ENCODE measurements at regions of chr15 and their contacts with region 1.

Region 1: DNA sequence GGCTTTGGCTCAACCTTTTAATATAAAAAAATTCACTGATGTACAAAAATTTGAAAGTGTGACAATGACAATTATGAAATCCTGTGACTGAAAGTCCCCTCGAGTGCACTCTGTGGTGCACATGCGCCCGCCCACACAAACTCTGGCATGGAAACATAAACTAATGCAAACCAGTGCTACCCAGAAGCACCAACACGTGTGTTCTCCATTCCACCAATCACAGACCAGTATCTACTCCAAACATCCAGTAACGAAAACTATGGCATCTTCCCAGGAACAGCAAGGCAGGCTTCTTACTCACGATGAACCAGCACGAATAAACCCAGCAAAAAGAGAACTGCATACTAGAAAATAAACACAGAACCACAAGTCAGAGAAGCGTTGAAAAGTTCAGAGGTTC is 11.7 kb upstream of the NMB start:
- DNase-seq: peak; percentile 59
- H3K4me3 Mint-ChIP-seq: no peak overlapping the region
- H3K27ac Mint-ChIP-seq: no peak overlapping the region
- H3K4me1 Mint-ChIP-seq: peaks cover 35% of the 10 kb centered on the region
- H3K27me3 Mint-ChIP-seq: no peaks in the 10 kb centered on the region

Region 2: DNA sequence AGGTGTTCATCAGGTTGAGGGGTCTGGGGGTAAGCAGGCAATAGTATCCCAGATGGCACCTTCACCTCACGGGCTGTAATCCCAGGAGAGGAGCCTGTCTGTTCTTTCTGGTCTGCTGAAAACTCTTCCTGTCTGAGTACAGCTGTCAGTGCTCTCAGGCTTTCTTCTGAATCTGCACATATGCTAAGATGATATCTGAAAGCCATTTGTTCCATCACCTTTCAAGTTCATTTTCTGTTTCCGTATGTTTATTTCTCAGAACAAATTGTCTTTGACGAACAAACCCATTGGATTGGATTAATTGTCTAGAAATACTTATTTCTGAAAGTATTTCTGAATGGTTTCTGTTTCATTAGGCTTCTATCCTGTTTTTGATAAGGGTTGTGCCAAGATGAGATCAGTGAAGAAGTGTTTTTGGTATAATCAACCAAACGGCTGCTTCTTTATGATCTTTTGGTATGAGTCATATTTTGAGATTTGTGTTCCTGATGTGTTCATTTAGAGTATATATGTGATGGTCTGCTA is 91.9 kb after region 1 on chr15:
- CTCF ChIA-PET with region 1: no interaction called
- intact Hi-C with region 1: loop called (anchors 1 kb)
- DNase-seq: peak; percentile 20
- H3K4me3 Mint-ChIP-seq: no peak overlapping the region
- H3K27ac Mint-ChIP-seq: no peak overlapping the region
- H3K4me1 Mint-ChIP-seq: peaks cover 28% of the 10 kb centered on the region
- H3K27me3 Mint-ChIP-seq: no peaks in the 10 kb centered on the region

Region 3: GRCh38 chr15:84783496-84784251 is 113.9 kb after region 1 on chr15:
- CTCF ChIA-PET with region 1: no interaction called
- intact Hi-C with region 1: no loop called
- DNase-seq: peak; percentile 42
- H3K4me3 Mint-ChIP-seq: no peak overlapping the region
- H3K27ac Mint-ChIP-seq: no peak overlapping the region
- H3K4me1 Mint-ChIP-seq: peaks cover 51% of the 10 kb centered on the region
- H3K27me3 Mint-ChIP-seq: no peaks in the 10 kb centered on the region